ENCODE measurements at regions of chr12 and their contacts with region 1.

Region 1: DNA sequence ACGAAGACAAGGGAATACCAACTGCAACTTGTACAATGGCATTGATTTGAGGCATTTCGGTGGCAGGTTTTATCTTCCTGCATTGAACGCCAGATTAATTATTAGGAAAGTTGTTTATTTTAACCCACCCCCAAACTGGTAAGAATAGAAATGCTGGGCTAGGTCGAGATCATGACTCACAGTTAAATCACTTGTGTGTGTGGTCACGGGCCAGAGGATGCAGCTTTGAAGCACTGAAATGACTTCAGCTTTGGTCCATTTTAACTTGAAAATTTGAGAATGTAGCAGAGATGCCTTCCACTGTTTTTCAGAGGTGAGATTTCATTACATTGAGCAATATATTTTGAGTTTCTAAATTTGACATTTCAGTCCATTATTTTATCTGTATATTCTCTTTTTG is 23.6 kb upstream of the KCNH3 start:
- DNase-seq: no peak
- ATAC-seq: peak; percentile 73
- H3K4me3 ChIP-seq: peak overlapping the region in 1 of 2 experiments; percentile 36; a peak in 2 of 4 replicates
- H3K27ac ChIP-seq: peak overlapping the region; percentile 95
- H3K4me1 ChIP-seq: peaks cover 84% of the 10 kb centered on the region in 2 experiments
- H3K27me3 ChIP-seq: no peaks in the 10 kb centered on the region
- CTCF ChIP-seq: no peak
- POLR2A ChIP-seq: no peak
- RAD21 ChIP-seq: peak; percentile 17; the same call in 1 of the 2 replicates

Region 2: GRCh38 chr12:49288412-49288853 is 226.8 kb before region 1 on chr12:
- CTCF ChIA-PET with region 1: interaction called, 11 read pairs
- POLR2A ChIA-PET with region 1: no interaction called
- RAD21 ChIA-PET with region 1: no interaction called
- intact Hi-C with region 1: loop called (anchors 2 kb)
- DNase-seq: peak; percentile 46
- ATAC-seq: peak; percentile 74
- H3K4me3 ChIP-seq: no peak overlapping the region
- H3K27ac ChIP-seq: no peak overlapping the region
- H3K4me1 ChIP-seq: peaks cover 0 to 10% of the 10 kb centered on the region in 2 experiments; a peak in 2 of 4 replicates
- H3K27me3 ChIP-seq: no peaks in the 10 kb centered on the region
- CTCF ChIP-seq: peak; percentile 76 to 97 (median 89)
- POLR2A ChIP-seq: no peak
- RAD21 ChIP-seq: peak; percentile 92

Region 3: GRCh38 chr12:49296034-49296835 is 219.0 kb before region 1 on chr12:
- CTCF ChIA-PET with region 1: interaction called, 6 read pairs
- POLR2A ChIA-PET with region 1: no interaction called
- RAD21 ChIA-PET with region 1: no interaction called
- intact Hi-C with region 1: loop called (anchors 2 kb)
- DNase-seq: no peak
- ATAC-seq: peak; percentile 71
- H3K4me3 ChIP-seq: peak overlapping the region; percentile 47 to 48
- H3K27ac ChIP-seq: no peak overlapping the region; the same call in 1 of the 2 replicates
- H3K4me1 ChIP-seq: peaks cover 10 to 35% of the 10 kb centered on the region in 2 experiments; a peak in 3 of 4 replicates
- H3K27me3 ChIP-seq: no peaks in the 10 kb centered on the region
- CTCF ChIP-seq: peak; percentile 66 to 91 (median 90)
- POLR2A ChIP-seq: no peak
- RAD21 ChIP-seq: no peak

Region 4: DNA sequence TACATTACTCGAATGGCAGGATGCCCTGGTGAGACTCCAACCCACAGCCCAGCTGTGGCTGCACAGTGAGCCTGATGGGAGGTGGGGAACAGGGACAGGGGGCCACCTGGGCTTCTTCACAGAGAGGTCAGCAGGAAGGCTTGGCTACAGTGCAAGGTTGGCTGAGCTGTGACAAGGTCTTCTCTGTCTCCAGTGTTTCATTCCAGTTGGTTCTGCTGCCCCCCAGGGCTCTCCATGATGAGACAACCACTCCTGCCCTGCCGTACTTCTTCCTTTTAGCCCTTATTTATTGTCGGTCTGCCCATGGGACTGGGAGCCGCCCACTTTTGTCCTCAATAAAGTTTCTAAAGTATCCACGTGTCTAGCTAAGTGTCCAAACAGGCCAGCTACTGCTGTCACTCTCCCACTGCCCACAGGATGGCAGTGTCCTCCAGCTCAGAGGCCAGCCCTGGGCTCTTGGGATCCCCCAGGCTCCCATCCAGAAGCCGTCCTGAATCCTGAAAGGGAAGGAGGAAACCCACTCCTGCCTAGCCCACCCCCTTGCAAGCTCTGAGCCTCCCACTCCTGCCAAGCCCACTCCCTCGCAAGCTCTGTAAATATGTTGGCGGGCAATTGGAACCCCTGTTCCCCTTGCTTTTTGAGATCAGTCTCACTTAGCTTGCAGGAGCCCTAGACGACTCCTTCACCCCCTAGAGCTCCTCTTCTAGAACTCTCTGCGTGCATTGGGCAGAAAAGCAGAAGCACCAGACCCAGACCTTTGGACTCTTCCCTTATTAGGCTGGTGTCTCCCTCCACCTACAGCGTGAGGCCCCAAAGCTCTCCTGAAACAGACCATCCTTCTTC is 183.7 kb before region 1 on chr12:
- CTCF ChIA-PET with region 1: interaction called, 29 read pairs
- POLR2A ChIA-PET with region 1: no interaction called
- RAD21 ChIA-PET with region 1: no interaction called
- intact Hi-C with region 1: no loop called
- DNase-seq: peak; percentile 43
- ATAC-seq: peak; percentile 84
- H3K4me3 ChIP-seq: no peak overlapping the region
- H3K27ac ChIP-seq: peak overlapping the region; percentile 35
- H3K4me1 ChIP-seq: peaks cover 4 to 11% of the 10 kb centered on the region in 2 experiments; a peak in 2 of 4 replicates
- H3K27me3 ChIP-seq: no peaks in the 10 kb centered on the region
- CTCF ChIP-seq: peak; percentile 79 to 87 (median 86)
- POLR2A ChIP-seq: no peak
- RAD21 ChIP-seq: peak; percentile 86

Region 5: GRCh38 chr12:49366652-49367380 is 148.4 kb before region 1 on chr12:
- CTCF ChIA-PET with region 1: interaction called, 261 read pairs
- POLR2A ChIA-PET with region 1: interaction called, 14 read pairs
- RAD21 ChIA-PET with region 1: interaction called, 5 to 7 read pairs
- intact Hi-C with region 1: loop called (anchors 2 kb)
- DNase-seq: peak; percentile 80
- ATAC-seq: peak; percentile 85
- H3K4me3 ChIP-seq: peak overlapping the region; percentile 65 to 71
- H3K27ac ChIP-seq: peak overlapping the region; percentile 99
- H3K4me1 ChIP-seq: peaks cover 38 to 52% of the 10 kb centered on the region in 2 experiments
- H3K27me3 ChIP-seq: no peaks in the 10 kb centered on the region
- CTCF ChIP-seq: 0 out of 6 replicates have a peak, but pooled peaks of 2 of the 3 experiments have one; percentile 11 to 12
- POLR2A ChIP-seq: peak; percentile 71
- RAD21 ChIP-seq: 0 out of 2 replicates have a peak, but pooled peaks have one; percentile 1

Region 6: GRCh38 chr12:49503674-49504180 is 11.5 kb before region 1 on chr12:
- CTCF ChIA-PET with region 1: interaction called, 31 read pairs
- POLR2A ChIA-PET with region 1: interaction called, 13 read pairs
- RAD21 ChIA-PET with region 1: no interaction called
- intact Hi-C with region 1: no loop called
- DNase-seq: peak; percentile 98
- ATAC-seq: peak; percentile 66
- H3K4me3 ChIP-seq: peak overlapping the region in 1 of 2 experiments; percentile 46; a peak in 2 of 4 replicates
- H3K27ac ChIP-seq: peak overlapping the region; percentile 95
- H3K4me1 ChIP-seq: peaks cover 73 to 79% of the 10 kb centered on the region in 2 experiments
- H3K27me3 ChIP-seq: no peaks in the 10 kb centered on the region
- CTCF ChIP-seq: no peak
- POLR2A ChIP-seq: no peak
- RAD21 ChIP-seq: peak; percentile 21; the same call in 1 of the 2 replicates

Region 7: DNA sequence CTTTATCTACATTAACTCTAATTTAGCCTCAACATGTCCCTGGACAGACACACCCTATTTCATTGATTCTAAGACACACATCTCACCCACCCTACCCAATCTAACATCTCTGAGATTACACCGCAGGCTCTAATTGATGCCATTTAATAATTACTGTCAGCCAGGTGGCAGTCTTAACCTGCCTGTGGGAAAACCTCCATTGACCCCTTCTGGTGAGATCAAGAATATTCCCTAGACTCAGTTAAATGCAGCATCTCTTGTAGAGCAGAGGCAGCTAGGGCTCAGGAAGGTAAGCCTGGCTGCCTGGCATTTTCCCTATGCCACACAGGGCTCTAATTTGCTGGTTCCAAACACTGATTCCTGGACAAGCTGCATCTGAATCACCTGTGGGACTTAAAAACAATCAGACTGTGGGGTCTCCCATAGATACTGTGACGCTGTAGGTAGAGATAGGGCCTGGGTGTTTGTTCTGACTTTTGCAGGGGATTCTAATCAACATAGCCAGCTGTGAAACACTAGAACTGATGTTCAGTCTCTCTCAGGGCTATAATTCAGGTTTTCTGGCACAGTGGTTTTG is 38.3 kb after region 1 on chr12:
- CTCF ChIA-PET with region 1: interaction called, 13 read pairs
- POLR2A ChIA-PET with region 1: no interaction called
- RAD21 ChIA-PET with region 1: no interaction called
- intact Hi-C with region 1: no loop called
- DNase-seq: peak; percentile 45
- ATAC-seq: peak; percentile 75
- H3K4me3 ChIP-seq: no peak overlapping the region
- H3K27ac ChIP-seq: no peak overlapping the region
- H3K4me1 ChIP-seq: peaks cover 0 to 5% of the 10 kb centered on the region in 2 experiments; a peak in 2 of 4 replicates
- H3K27me3 ChIP-seq: no peaks in the 10 kb centered on the region
- CTCF ChIP-seq: peak; percentile 80 to 99 (median 81)
- POLR2A ChIP-seq: no peak
- RAD21 ChIP-seq: peak; percentile 94